Psoas muscle (tissue), 8 donors: ENCODE measurements at regions of chr3 and their contacts with region 1.

Region 1: GRCh38 chr3:53347261-53348064 is at the start of gene DCP1A:
- DNase-seq: peak; percentile 96 to 97
- ATAC-seq: peak; percentile 98 to 99 (median 98)
- H3K4me3 ChIP-seq: peak within 1 kb of the TSS; percentile 89
- H3K27ac ChIP-seq: peak within 1 kb of the TSS; percentile 96
- H3K4me1 ChIP-seq: peaks cover 23% of the 10 kb centered on the region
- H3K27me3 ChIP-seq: no peaks in the 10 kb centered on the region
- CTCF ChIP-seq: no peak
- total RNA-seq, gene DCP1A: 16.2 to 19.3 (median 17.7) TPM

Region 2: GRCh38 chr3:53320697-53321096 is 26.8 kb before region 1 on chr3:
- intact Hi-C with region 1: loop called in 1 of 2 experiments (anchors 2 kb)
- DNase-seq: peak; percentile 57 to 78
- ATAC-seq: peak; percentile 97 to 99 (median 97)
- H3K4me3 ChIP-seq: no peak overlapping the region
- H3K27ac ChIP-seq: peak overlapping the region; percentile 83
- H3K4me1 ChIP-seq: peaks cover 46% of the 10 kb centered on the region
- H3K27me3 ChIP-seq: no peaks in the 10 kb centered on the region
- CTCF ChIP-seq: peak; percentile 49

Region 3: DNA sequence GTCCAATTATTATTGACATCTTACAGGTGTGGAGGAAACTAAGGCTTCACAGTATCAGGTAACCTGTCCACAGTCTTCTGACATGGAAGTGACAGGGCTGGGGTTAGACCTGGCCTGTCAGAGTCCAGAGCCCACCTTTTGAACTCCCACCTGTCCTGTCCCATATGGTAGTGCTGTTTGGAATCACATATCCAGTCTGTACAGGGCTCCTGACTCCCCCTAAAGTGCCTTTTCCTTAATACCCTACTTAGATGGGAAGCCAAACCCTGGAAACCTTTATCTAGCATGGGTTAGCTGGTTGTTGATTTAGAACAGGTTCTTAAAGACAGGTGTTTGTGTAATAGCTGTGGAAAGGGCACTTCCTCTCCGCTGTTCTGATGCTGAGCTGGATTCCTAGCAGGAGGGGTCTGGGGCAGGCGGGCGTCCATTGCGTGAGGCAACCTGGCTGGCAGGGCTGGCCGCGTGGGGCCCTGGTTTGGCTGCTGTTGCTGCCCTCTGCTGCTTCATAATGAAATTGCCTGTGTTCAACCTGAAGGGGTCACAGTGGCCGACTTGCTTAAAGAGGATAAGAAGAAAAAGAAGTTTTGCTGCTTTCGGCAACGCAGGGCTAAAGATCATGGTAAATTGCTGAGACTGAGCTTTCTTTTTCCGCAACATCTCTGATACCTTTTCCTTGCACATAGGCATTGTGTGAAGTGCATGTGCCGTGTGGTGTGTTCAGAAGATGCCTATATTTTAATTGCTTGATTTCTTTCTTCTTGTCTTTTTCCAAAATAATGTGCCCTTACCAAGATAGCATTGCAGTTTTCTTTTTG is 362.6 kb after region 1 on chr3:
- intact Hi-C with region 1: no loop called
- DNase-seq: peak; percentile 63 to 83
- ATAC-seq: peak; percentile 89 to 98 (median 94)
- H3K4me3 ChIP-seq: no peak overlapping the region
- H3K27ac ChIP-seq: no peak overlapping the region
- H3K4me1 ChIP-seq: no peaks in the 10 kb centered on the region
- H3K27me3 ChIP-seq: no peaks in the 10 kb centered on the region
- CTCF ChIP-seq: peak; percentile 76

Region 4: DNA sequence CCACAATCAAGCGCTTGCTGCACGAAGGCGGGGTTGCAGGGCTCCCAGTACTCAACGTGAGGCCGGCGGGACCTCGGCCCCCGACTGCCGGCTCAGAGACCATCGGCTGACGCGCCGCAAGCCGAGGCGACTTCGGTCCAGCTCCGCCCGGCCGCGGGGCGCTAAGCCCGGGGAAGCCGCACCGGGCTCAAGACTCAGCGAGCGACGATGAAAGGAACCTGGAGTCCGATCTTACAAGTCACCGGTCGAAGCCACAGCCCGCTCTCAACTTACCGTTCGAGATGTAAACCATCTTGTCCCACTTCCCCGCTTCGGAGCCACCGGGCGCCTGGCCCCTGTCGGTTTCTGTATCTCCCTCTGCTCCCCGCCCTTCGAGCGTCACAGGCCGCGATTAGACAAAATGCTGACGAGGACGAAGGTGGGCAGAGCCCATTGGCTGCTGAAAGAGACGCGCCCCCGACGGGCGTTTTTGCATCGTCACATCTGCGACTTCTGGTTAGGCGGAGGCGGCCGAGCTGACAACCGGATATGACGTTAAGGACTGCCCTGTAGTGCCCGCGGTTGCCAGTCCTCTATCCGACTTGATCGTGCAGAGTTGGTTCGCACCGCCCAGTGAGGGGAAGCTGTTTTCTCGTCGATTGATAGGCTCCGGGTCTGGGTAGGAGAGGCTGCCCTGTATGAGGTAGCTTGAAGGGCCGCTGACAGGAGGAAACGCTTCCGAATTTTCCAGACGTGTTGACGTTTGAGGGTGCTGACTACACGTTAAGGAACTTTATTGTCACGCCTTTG is 544.2 kb after region 1 on chr3 and contains the start of gene SELENOK:
- intact Hi-C with region 1: loop called (anchors 5 to 10 kb)
- DNase-seq: peak; percentile 98 to 99
- ATAC-seq: peak; percentile 98 to 99 (median 98)
- H3K4me3 ChIP-seq: peak within 1 kb of the TSS; percentile 96
- H3K27ac ChIP-seq: peak within 1 kb of the TSS; percentile 97
- H3K4me1 ChIP-seq: peaks cover 22% of the 10 kb centered on the region
- H3K27me3 ChIP-seq: peaks cover 0 to 11% (median 2%) of the 10 kb centered on the region in 3 donors
- CTCF ChIP-seq: peak; percentile 1
- total RNA-seq, gene SELENOK: 46.3 to 74.8 (median 54.7) TPM